AG04449 (cell line): ENCODE measurements at regions of chr17 and their contacts with region 1.

Region 1: DNA sequence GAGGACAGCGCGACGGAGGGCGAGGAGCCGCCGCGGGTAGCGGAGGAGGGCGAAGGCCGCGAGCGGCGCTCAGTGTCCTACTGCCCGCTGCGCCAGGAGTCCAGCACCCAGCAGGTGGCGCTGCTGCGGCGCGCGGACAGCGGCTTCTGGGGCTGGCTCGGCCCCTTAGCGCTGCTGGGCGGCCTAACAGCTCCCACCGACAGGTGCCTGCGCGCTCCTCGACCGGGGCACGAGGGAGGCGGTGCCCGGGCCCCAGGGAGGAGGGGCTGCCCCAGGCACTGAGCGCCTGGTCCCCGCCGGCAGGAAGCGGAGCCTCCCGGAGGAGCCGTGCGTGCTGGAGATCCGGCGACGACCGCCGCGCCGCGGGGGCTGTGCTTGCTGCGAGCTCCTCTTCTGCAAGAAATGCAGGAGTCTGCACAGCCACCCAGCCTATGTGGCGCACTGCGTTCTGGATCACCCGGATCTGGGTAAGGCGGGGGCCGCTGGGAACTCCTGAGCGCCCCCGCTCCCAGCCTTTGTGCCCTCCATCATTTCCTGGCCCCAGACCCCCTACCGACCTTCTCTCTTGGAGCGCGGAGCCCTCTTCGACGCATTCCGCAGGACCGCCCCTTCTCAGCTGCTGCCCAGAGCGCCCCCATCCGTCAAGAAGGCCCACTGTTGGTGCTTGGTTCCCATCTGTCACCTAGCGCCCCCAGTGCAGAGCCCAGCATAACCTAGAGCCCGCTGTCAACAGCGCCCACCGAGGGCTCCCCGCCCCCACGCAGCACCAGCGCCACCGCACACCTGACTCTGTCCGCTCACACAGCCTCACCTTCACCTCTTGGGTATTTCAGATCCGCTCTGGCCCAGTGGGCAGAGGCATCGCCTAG is 3.7 kb downstream of the C17orf50 start:
- DNase-seq: no peak
- H3K4me3 ChIP-seq: peak overlapping the region; percentile 46
- CTCF ChIP-seq: peak; percentile 98

Region 2: DNA sequence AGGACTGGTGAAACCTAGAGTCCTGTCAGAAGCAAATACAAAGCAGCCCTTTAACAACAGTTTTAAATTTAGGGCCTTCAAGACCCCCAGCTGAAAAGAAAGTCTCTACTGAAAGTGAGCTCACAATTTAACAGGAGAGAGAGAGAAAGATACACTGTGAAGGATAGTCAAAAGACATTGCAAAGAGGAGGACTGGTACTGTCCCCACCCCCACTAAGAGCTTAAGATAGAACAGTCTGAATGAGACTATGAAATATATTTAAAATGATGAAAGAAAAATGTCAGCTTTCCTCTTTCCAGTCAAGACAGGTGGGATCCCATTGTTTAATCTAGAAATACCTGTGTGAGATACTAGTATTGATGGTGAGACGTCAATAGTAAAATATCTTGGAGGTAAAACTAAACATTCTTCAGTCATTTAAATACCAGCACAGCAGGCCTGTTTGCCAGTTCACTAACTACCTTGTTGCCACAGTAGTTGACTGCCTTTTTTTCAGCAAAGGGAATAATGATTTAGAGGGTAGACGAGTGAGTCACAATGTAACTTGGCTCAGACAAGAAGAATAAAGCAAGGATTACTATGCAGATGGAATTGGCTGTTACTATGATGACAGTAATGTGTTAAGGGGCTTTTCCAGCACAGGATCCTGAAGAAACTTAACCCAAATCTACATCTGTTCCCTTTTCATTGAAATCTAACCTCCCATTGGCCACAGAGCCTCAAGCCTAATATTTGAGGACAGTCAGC is 80.1 kb before region 1 on chr17:
- CTCF ChIA-PET with region 1: interaction called, 12 read pairs
- POLR2A ChIA-PET with region 1: no interaction called
- DNase-seq: peak; percentile 41
- H3K4me3 ChIP-seq: no peak overlapping the region
- CTCF ChIP-seq: no peak

Region 3: DNA sequence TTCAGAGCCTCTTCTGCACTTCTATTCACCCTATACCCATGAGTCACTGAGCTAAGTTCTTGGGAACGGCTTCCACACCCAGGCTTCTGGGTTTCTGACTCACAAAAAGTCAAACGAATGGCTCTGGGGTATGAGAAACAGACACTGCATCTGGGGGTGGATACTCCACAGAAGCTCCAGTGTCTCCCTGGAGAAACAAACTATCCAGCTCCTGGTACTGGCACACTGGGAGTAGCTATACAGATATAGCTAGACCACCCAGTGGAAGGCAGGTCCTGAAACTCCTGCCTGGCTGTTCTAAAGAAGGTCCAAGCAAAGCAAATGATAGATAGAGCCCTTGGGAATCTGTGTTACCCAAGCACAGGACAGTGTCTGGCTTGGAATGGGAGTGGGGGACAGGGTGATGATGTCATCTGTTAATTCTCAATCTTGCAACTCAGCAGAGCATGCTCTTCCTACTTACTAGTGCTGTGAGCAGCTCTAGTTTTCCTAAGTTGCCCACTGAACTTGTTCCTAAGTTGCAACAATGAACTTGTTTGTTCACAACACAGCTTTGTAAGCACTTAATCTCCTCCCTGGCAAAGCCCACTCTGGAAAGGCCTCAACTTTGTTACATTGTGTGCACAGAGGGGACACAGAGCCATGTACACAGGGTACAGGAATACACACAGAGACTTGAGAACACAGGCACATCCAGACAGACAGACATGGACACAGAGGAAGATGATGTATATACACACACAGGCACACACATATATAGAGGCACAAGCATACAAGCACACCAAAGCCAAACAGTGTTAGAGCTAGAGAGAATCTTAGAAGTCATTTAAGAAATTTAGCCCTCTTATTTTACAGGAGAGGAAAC is 24.4 kb after region 1 on chr17:
- CTCF ChIA-PET with region 1: interaction called, 321 read pairs
- POLR2A ChIA-PET with region 1: no interaction called
- DNase-seq: no peak
- H3K4me3 ChIP-seq: peak overlapping the region; percentile 4; the same call in 1 of the 2 replicates
- CTCF ChIP-seq: no peak

Region 4: GRCh38 chr17:35808962-35809854 is 44.9 kb after region 1 on chr17 and contains the start of gene TAF15:
- CTCF ChIA-PET with region 1: interaction called, 819 read pairs
- POLR2A ChIA-PET with region 1: interaction called, 12 read pairs
- DNase-seq: peak; percentile 95
- H3K4me3 ChIP-seq: peak within 1 kb of the TSS; percentile 88
- CTCF ChIP-seq: peak; percentile 83

Region 5: DNA sequence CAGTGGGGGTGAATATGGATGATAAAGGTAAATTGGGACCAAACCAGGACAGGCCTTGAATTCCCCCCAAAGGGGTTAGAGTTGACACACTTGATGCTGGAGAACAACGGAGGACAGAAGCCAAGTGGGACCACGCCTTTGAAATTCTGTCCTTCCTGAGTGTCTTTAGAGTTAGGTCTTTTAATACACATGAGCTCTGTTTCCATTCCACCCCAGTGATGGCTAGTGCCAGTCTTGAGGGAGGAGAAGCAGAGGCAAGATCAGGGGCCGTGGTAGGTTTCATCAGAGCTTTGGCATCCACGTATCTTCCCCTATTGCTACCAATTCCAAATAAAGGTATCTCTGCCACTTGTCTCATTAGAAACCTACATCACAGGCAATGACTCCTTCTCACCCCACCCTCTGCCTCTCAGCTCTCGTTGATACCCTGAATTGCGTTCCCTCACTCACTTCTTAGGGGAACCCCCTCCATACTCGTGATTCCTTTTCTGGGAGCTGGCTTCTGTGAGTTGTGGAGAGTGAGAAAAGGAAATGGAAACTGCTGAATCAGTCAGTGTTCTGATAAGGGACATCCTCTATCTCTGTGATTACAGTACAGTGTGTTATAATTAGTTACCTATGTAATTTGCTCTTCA is 434.6 kb after region 1 on chr17:
- CTCF ChIA-PET with region 1: no interaction called
- POLR2A ChIA-PET with region 1: no interaction called
- DNase-seq: no peak
- H3K4me3 ChIP-seq: no peak overlapping the region
- CTCF ChIP-seq: no peak